Activated CD4-positive, alpha-beta memory T cell treated with anti-CD3 and anti-CD28 coated beads for 36 hours (primary cell): ENCODE measurements at regions of chr3 and their contacts with region 1.

Region 1: GRCh38 chr3:136332776-136333175 is 82.6 kb downstream of the PCCB start:
- DNase-seq: no peak
- H3K4me3 Mint-ChIP-seq: no peak overlapping the region
- H3K27ac Mint-ChIP-seq: no peak overlapping the region
- H3K4me1 Mint-ChIP-seq: peaks cover 5% of the 10 kb centered on the region
- H3K27me3 Mint-ChIP-seq: no peaks in the 10 kb centered on the region

Region 2: GRCh38 chr3:136055491-136055890 is 277.3 kb before region 1 on chr3:
- CTCF ChIA-PET with region 1: no interaction called
- POLR2A ChIA-PET with region 1: no interaction called
- intact Hi-C with region 1: loop called (anchors 5 kb)
- DNase-seq: no peak
- H3K4me3 Mint-ChIP-seq: no peak overlapping the region
- H3K27ac Mint-ChIP-seq: no peak overlapping the region
- H3K4me1 Mint-ChIP-seq: no peaks in the 10 kb centered on the region
- H3K27me3 Mint-ChIP-seq: peaks cover 13% of the 10 kb centered on the region

Region 3: DNA sequence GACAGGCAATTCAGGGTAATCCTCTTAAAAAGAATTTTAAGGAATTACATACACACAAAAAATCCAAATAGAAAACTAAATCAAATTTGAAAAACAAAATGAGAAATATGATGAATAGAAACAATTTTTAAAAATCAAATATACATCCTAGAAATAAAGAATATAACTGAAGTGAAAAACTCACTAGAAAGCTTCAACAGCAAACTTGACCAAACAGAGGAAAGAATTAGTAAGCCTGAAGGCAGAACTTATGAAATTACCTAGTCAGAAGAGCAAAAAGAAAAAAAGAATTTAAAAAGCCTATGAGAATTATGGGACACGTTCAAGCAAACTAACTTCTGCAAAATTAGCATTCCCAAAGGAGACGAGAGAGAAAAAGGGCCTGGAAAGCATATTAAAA is 123.4 kb after region 1 on chr3:
- CTCF ChIA-PET with region 1: no interaction called
- POLR2A ChIA-PET with region 1: no interaction called
- intact Hi-C with region 1: no loop called
- DNase-seq: no peak
- H3K4me3 Mint-ChIP-seq: no peak overlapping the region
- H3K27ac Mint-ChIP-seq: no peak overlapping the region
- H3K4me1 Mint-ChIP-seq: no peaks in the 10 kb centered on the region
- H3K27me3 Mint-ChIP-seq: no peaks in the 10 kb centered on the region